H1 (cell line): ENCODE measurements at regions of chr14 and their contacts with region 1.

Region 1: GRCh38 chr14:67426983-67427606 is 15.1 kb upstream of the PLEK2 start:
- DNase-seq: peak; percentile 70 to 82
- H3K4me3 ChIP-seq: peak overlapping the region in 1 of 4 experiments; percentile 20; a peak in 1 of 8 replicates
- H3K27ac ChIP-seq: no peak overlapping the region
- H3K4me1 ChIP-seq: peaks cover 0 to 7% (median 2%) of the 10 kb centered on the region in 4 experiments; a peak in 3 of 7 replicates
- H3K27me3 ChIP-seq: no peaks in the 10 kb centered on the region
- CTCF ChIP-seq: peak; percentile 56 to 88 (median 87)
- EP300 ChIP-seq: no peak
- POLR2A ChIP-seq: no peak
- RAD21 ChIP-seq: peak; percentile 92 to 96

Region 2: GRCh38 chr14:67391307-67391706 is 35.8 kb before region 1 on chr14:
- CTCF ChIA-PET with region 1: interaction called, 10 read pairs
- POLR2A ChIA-PET with region 1: interaction called, 3 read pairs
- DNase-seq: no peak
- H3K4me3 ChIP-seq: no peak overlapping the region
- H3K27ac ChIP-seq: no peak overlapping the region
- H3K4me1 ChIP-seq: no peaks in the 10 kb centered on the region
- H3K27me3 ChIP-seq: no peaks in the 10 kb centered on the region
- CTCF ChIP-seq: no peak
- EP300 ChIP-seq: no peak
- POLR2A ChIP-seq: no peak
- RAD21 ChIP-seq: no peak

Region 3: DNA sequence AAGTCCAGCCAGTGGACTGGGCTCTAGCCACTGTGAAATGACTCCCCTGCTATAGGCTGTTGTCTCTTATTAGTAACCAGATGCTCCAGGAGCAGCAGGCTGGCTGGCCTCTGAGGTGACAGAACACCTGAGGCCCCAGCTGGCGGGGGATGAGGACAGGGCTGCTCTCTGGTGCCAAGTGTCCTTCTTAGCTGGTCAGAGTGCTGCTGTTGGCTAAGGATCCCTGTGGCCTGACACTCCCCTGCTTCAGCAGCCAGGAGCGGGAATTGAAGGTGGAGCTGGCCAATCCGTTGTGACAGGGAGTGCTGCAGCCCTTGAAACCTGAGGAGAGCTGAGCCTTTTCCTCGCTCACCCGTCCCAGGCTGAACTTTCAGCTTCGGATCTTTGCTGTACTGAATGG is 30.7 kb after region 1 on chr14:
- CTCF ChIA-PET with region 1: interaction called, 68 read pairs
- POLR2A ChIA-PET with region 1: no interaction called
- DNase-seq: peak; percentile 17 to 58
- H3K4me3 ChIP-seq: no peak overlapping the region
- H3K27ac ChIP-seq: no peak overlapping the region
- H3K4me1 ChIP-seq: peaks cover 0 to 4% (median 1%) of the 10 kb centered on the region in 4 experiments; a peak in 3 of 7 replicates
- H3K27me3 ChIP-seq: no peaks in the 10 kb centered on the region; a peak in 1 of 7 replicates
- CTCF ChIP-seq: no peak
- EP300 ChIP-seq: no peak
- POLR2A ChIP-seq: no peak
- RAD21 ChIP-seq: no peak

Region 4: DNA sequence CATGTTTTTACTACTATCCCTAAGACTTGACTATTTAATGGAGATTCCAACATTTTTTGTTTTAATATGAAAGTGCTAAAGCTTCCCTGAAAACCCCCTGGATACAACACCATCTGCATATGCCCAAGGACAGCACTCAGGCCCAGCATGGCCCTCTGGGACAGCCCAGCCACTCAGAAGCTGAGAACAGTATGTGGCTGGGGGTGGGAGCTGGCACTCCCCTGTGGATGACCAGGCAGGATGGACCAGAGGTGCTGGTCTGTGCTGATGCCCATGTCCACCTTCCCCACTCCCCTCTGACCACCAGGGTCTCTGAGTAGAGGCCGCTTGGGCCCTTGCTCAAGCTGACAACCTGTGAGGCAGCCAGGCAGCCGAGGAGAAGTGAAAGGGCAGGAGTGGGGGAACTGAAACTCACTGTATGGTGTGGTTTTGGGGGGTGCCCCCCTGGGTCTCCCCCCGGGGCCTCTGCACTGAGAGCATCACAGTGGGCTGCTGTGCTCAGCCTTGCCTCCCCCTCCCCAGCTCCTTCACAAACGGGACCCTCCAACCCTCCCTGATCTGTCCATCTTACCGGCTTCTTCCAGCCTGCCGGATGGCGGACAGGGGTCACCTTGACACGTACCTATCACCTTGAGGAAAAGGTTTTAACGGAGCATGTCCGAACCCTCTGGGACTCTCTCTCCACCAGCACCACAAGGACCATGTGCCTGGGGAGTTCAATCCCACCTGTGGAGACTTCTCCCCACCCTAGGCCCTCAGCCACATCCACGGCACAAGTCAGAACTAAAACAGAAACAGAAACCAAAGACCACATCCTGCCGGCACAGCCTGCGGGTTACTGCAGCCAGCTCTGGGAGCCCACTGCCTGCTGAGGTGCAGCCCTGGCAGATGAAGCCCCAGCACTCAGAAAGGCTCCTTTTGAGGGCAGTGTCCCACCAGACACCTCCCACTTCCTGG is 61.1 kb after region 1 on chr14 and contains the start of gene TMEM229B:
- CTCF ChIA-PET with region 1: interaction called, 36 read pairs
- POLR2A ChIA-PET with region 1: no interaction called
- DNase-seq: no peak
- H3K4me3 ChIP-seq: no peak within 1 kb of the TSS
- H3K27ac ChIP-seq: no peak within 1 kb of the TSS
- H3K4me1 ChIP-seq: peaks cover 0 to 10% (median 5%) of the 10 kb centered on the region in 4 experiments; a peak in 4 of 7 replicates
- H3K27me3 ChIP-seq: no peaks in the 10 kb centered on the region
- CTCF ChIP-seq: no peak
- EP300 ChIP-seq: no peak
- POLR2A ChIP-seq: no peak
- RAD21 ChIP-seq: no peak
- total RNA-seq, gene TMEM229B: 0.50 and 0.73 TPM in 2 replicates

Region 5: GRCh38 chr14:67526676-67527459 is 99.8 kb after region 1 on chr14:
- CTCF ChIA-PET with region 1: interaction called, 98 read pairs
- POLR2A ChIA-PET with region 1: no interaction called
- DNase-seq: peak in 1 of 2 experiments; percentile 66
- H3K4me3 ChIP-seq: no peak overlapping the region
- H3K27ac ChIP-seq: no peak overlapping the region
- H3K4me1 ChIP-seq: no peaks in the 10 kb centered on the region; a peak in 1 of 7 replicates
- H3K27me3 ChIP-seq: no peaks in the 10 kb centered on the region
- CTCF ChIP-seq: peak; percentile 58 to 82 (median 80)
- EP300 ChIP-seq: no peak
- POLR2A ChIP-seq: no peak
- RAD21 ChIP-seq: peak; percentile 87 to 89

Region 6: GRCh38 chr14:67571272-67571850 is 144.3 kb after region 1 on chr14:
- CTCF ChIA-PET with region 1: interaction called, 446 read pairs
- POLR2A ChIA-PET with region 1: interaction called, 4 read pairs
- DNase-seq: peak; percentile 21 to 82
- H3K4me3 ChIP-seq: no peak overlapping the region
- H3K27ac ChIP-seq: no peak overlapping the region
- H3K4me1 ChIP-seq: no peaks in the 10 kb centered on the region
- H3K27me3 ChIP-seq: no peaks in the 10 kb centered on the region
- CTCF ChIP-seq: peak; percentile 92 to 97 (median 96)
- EP300 ChIP-seq: no peak
- POLR2A ChIP-seq: no peak
- RAD21 ChIP-seq: peak; percentile 85 to 87

Region 7: DNA sequence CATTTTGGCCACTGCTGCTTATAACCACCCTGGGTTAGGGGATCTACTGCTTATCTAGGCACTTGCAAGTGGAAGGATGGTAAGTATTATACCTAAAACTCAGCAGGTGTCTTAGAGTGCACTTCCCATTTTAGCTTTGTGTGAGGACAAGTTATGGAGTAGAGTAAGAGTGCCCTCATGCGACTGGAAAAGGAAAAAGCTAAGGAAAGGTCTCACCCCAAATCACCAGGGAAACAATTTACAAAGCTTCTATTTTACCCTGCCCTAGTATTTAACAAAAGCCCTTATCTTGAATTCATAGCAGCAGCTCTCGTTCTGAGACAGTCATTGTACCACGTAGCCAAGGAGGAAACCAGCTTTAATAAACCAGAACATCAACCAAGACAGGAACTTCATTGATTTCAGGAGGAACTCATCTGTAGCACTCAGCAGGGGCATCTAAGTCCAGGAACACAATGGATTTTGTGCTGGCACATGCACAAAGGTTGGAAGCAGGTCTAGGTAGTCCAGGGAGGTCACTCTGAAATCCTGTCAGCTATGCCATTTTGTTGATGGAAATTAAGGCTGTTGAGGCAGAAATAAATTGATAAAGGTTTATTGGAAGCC is 277.5 kb after region 1 on chr14:
- CTCF ChIA-PET with region 1: interaction called, 24 read pairs
- POLR2A ChIA-PET with region 1: no interaction called
- DNase-seq: no peak
- H3K4me3 ChIP-seq: no peak overlapping the region
- H3K27ac ChIP-seq: no peak overlapping the region
- H3K4me1 ChIP-seq: no peaks in the 10 kb centered on the region
- H3K27me3 ChIP-seq: no peaks in the 10 kb centered on the region
- CTCF ChIP-seq: peak in 2 of 3 experiments; percentile 66 to 73; a peak in 3 of 4 replicates
- EP300 ChIP-seq: no peak
- POLR2A ChIP-seq: no peak
- RAD21 ChIP-seq: peak; percentile 88 to 89